Mucosa of descending colon (tissue), 3 donors: ENCODE measurements at regions of chr7 and their contacts with region 1.

Region 1: GRCh38 chr7:135801045-135801693 is 52.6 kb upstream of the FAM180A start:
- DNase-seq: peak in 1 of 3 donors; percentile 71
- ATAC-seq: peak; percentile 64
- H3K4me3 ChIP-seq: no peak overlapping the region
- H3K4me1 ChIP-seq: no peaks in the 10 kb centered on the region
- CTCF ChIP-seq: no peak

Region 2: GRCh38 chr7:136009488-136010079 is 208.4 kb after region 1 on chr7:
- intact Hi-C with region 1: loop called (anchors 1 to 5 kb)
- DNase-seq: peak in 1 of 3 donors; percentile 16
- ATAC-seq: no peak
- H3K4me3 ChIP-seq: no peak overlapping the region
- H3K4me1 ChIP-seq: no peaks in the 10 kb centered on the region
- CTCF ChIP-seq: peak; percentile 45